Right ventricle myocardium inferior (tissue), 1 donor: ENCODE measurements at regions of chr14 and their contacts with region 1.

Region 1: DNA sequence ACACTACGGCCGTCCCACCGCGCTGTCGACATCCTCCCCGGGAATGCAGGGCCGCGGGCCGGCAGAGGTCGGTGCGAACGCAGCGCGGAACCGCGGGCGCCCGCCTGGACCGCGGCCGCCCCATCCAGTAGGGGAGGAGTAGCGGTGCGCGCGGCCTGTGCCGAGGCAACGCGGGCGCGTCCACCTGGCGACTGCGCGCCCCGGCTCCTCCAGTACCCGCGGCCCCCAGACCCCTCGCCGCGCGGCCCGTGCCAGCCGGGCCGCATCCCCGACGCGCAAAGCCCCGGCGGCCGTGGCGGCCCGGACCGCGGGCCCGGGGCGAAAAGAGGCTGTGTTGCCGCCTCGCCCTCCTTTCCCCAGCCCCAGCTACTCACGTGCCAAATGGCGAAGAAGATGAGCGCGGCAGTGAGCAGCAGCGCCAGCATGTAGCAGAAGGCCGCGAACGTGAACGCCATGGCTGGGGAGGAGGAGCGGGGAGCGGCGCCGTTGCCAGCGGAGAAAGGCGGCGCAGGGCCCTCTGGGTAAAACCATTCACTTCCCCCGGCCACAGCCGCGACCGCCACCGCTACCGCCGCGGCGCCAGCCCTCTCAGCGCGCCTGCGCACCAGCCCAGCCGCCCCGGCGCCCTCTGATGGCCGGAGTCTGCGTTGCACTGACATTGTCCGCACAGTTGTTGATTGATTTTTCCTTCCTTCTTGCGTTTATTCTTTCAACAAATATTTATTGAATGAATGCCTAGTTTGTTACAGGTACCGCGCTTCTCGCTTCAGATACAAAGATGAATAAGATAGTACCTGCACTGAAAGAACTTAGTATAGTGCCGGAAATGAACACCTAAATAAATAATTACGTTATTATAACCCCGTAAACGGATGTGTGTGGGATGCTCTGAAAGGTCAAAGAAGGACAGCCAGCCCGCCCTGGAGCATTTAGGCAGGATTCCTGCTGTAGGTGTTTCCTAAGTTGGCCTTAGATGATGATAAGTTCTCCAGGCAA is at the start of gene CNIH1:
- DNase-seq: peak; percentile 97
- ATAC-seq: peak; percentile 99
- total RNA-seq, gene CNIH1: 86.8 TPM

Region 2: GRCh38 chr14:54396493-54397335 is 44.5 kb before region 1 on chr14 and contains the start of gene CDKN3:
- intact Hi-C with region 1: loop called (anchors 1 kb)
- DNase-seq: peak; percentile 99
- ATAC-seq: peak; percentile 99
- total RNA-seq, gene CDKN3: 4.7 TPM

Region 3: GRCh38 chr14:54488646-54489317 is 47.6 kb after region 1 on chr14 and contains the start of gene GMFB:
- intact Hi-C with region 1: loop called (anchors 2 kb)
- DNase-seq: peak; percentile 97
- ATAC-seq: peak; percentile 97
- total RNA-seq, gene GMFB: 24.9 TPM